Mammary epithelial cell (primary cell): ENCODE measurements at regions of chr7 and their contacts with region 1.

Region 1: DNA sequence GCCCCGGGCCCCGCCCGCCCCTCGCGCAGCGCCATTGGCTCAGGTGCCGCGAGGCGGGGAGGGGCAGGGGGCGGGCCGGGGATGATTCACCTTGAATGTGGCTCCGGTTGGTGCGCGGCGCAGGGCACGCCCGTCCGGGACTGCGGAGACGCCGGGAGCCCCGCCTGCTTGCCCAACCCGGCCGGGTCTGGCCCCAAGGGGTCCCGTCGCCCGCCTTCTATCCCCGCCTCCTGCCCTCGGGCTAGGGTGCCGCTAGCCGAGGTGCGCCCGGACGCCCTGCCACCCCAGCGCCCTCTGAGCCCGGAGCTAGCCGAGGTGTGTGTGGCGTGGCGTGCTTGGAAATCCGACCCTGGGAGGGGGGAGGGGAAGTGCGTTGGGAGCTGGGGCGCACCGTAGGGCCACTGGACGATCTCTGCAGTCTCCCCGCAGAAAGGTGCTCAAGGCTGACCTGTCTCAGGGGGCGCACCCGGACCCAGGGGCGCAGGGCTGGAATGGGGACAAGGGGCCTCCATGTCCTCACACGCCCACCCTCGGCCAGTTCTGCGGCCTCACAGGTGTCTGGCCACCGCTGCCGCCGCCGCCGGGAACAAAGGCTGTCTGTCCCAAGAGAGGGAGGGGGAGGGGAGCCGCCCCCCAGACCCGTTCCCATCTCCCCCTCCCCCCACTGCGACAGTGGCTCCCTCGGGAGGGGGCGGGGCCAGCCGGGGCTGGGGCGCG is 168.9 kb downstream of the NRF1 start:
- DNase-seq: peak; percentile 90
- H3K4me3 ChIP-seq: peak overlapping the region; percentile 45 to 97 (median 70)
- H3K27ac ChIP-seq: peak overlapping the region; percentile 33
- H3K4me1 ChIP-seq: peaks cover 8% of the 10 kb centered on the region
- H3K27me3 ChIP-seq: peaks cover 33% of the 10 kb centered on the region
- CTCF ChIP-seq: no peak

Region 2: GRCh38 chr7:129401228-129401966 is 379.0 kb before region 1 on chr7:
- CTCF ChIA-PET with region 1: no interaction called
- dilution Hi-C with region 1: no loop called
- in situ Hi-C with region 1: no loop called
- intact Hi-C with region 1: no loop called
- DNase-seq: peak; percentile 7
- H3K4me3 ChIP-seq: no peak overlapping the region
- H3K27ac ChIP-seq: no peak overlapping the region
- H3K4me1 ChIP-seq: no peaks in the 10 kb centered on the region
- H3K27me3 ChIP-seq: no peaks in the 10 kb centered on the region
- CTCF ChIP-seq: no peak

Region 3: DNA sequence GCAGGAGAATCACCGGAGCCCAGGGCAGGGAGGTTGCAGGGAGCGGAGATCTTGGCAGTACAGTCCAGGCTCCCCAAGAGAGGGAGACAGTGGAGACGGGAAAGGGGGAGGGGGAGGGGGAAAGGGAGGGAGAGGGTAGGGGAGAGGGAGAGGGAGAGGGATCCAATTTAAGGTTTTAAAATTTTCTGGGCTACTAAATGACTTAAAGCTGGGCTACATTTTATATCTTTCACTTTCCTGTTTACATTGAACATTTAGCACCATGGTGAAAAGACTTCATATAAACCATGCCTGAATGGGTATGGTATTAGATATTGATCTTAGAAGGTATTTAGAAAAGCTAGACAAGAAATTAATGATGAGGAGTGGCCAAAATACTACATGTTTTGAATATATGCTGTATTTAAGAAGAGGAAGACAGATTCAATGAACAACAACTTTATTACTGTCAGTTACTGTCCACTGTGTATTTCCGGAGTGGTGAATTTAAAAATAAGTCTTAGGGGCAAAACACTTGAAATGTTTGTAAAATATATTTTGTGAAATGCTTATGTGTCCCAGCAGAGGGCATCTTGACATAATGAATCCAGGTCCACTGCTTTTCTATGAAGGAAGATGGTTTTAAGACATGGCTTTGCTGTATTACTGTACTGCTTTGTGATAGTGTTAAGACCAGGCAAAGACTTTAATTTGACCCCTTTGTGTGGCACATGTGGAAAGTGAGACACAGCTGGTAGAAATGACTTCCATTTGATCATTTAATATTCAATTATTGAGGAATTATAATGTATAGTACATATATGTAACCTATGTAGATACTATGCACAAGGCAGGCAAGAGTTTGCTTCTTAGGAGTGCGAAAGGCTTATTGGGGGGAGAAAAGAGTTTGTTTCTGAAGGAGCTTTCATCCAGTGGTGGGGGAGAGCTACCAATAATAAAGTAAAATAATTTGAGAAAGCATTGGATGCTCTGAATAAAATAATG is 116.1 kb before region 1 on chr7:
- CTCF ChIA-PET with region 1: no interaction called
- dilution Hi-C with region 1: no loop called
- in situ Hi-C with region 1: no loop called
- intact Hi-C with region 1: loop called (anchors 1 kb)
- DNase-seq: peak; percentile 48
- H3K4me3 ChIP-seq: no peak overlapping the region
- H3K27ac ChIP-seq: peak overlapping the region; percentile 4
- H3K4me1 ChIP-seq: peaks cover 17% of the 10 kb centered on the region
- H3K27me3 ChIP-seq: no peaks in the 10 kb centered on the region
- CTCF ChIP-seq: peak; percentile 65 to 66

Region 4: GRCh38 chr7:129734400-129734799 is 46.0 kb before region 1 on chr7:
- CTCF ChIA-PET with region 1: no interaction called
- dilution Hi-C with region 1: no loop called
- in situ Hi-C with region 1: no loop called
- intact Hi-C with region 1: no loop called
- DNase-seq: no peak
- H3K4me3 ChIP-seq: no peak overlapping the region
- H3K27ac ChIP-seq: no peak overlapping the region
- H3K4me1 ChIP-seq: no peaks in the 10 kb centered on the region
- H3K27me3 ChIP-seq: no peaks in the 10 kb centered on the region
- CTCF ChIP-seq: no peak

Region 5: GRCh38 chr7:129748356-129749109 is 31.9 kb before region 1 on chr7:
- CTCF ChIA-PET with region 1: no interaction called
- dilution Hi-C with region 1: no loop called
- in situ Hi-C with region 1: no loop called
- intact Hi-C with region 1: no loop called
- DNase-seq: no peak
- H3K4me3 ChIP-seq: no peak overlapping the region
- H3K27ac ChIP-seq: no peak overlapping the region
- H3K4me1 ChIP-seq: peaks cover 15% of the 10 kb centered on the region
- H3K27me3 ChIP-seq: no peaks in the 10 kb centered on the region
- CTCF ChIP-seq: no peak

Region 6: DNA sequence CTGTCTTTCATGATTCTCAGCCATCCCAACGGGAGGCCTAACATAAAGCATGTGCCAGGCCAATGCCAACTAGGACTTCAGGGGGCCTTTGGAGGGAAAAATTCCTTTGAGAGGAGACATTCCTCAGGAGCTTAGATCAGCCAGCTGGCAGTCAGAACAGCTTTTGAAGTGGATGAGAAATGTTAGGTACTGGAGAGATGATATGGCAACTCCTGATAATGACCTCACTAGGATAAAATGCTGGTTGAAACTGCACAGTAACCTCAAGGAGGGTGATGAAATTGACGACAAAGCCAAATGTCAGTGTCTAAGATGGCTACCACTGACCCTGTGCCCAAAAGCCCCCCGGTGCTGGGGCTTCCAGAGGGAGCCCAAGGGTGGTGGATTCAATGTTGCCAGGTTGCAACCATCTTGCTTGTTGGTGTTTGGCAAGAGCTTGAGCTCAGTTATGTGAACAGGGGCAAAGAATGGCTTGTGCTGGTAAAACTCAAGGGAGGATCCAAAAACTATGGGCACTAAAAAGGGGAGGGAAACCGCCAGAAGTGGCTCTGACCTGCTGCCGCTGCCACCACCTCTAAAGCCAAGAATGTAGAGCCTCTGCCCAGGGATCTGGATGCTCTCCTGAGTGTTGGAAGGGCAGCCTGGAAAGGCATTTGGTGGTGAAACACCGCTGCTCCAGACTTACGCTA is 51.2 kb after region 1 on chr7:
- CTCF ChIA-PET with region 1: no interaction called
- dilution Hi-C with region 1: no loop called
- in situ Hi-C with region 1: no loop called
- intact Hi-C with region 1: no loop called
- DNase-seq: peak; percentile 89
- H3K4me3 ChIP-seq: no peak overlapping the region
- H3K27ac ChIP-seq: peak overlapping the region; percentile 77
- H3K4me1 ChIP-seq: peaks cover 30% of the 10 kb centered on the region
- H3K27me3 ChIP-seq: no peaks in the 10 kb centered on the region
- CTCF ChIP-seq: no peak